Activated T-helper 1 cell treated with anti-CD3 and anti-CD28 coated beads, Interleukin-12 subunit alpha, Interleukin-12 subunit beta, Interleukin-2, Interleukin-4 antibody, amounts not matched to agents 30 ng/mL and 10 ng/mL and 1 ng/mL, durations not matched to agents 14 hours and 24 hours and 36 hours (primary cell): ENCODE measurements at regions of chr4 and their contacts with region 1.

Region 1: DNA sequence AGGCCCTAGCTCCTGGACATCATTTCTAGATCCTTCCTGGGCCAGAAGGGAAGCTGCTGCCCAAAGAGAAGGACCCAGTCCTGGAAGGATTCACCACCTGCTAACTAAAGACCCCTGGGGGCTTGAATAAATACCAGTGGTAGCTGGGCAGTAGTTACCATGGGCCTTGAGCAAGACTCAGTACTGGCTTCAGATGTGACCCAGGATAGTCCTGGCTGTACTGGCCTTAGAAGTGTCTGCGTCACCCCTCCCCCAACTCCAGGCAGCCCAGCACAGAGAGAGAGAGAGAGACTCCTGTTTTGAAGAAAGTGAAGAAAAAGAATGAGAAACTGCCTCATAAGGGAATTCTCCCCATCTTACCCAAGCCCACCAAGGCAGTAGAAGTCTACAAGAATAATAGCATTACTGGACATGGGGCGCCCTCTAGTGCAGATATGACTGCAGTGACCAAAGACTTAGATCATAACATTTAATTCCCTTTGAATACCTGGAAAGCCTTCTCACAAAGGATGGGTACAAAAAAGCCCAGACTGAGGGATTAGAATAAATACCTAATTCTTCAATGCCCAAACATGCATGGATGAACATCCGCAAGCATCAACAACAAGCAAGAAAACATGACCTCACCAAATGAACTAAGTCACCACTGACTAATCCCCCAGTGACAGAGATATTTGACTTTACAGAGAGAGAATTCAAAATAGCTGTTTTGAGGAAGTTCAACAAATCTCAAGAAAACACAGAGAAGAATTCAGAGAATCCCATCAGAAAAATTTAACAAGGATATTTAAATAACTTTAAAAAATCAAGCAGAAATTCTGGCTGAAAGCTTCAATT is 171.8 kb downstream of the HNRNPD start:
- DNase-seq: no peak
- H3K4me3 Mint-ChIP-seq: no peak overlapping the region
- H3K27ac Mint-ChIP-seq: no peak overlapping the region
- H3K4me1 Mint-ChIP-seq: no peaks in the 10 kb centered on the region
- H3K27me3 Mint-ChIP-seq: peaks cover 8% of the 10 kb centered on the region

Region 2: DNA sequence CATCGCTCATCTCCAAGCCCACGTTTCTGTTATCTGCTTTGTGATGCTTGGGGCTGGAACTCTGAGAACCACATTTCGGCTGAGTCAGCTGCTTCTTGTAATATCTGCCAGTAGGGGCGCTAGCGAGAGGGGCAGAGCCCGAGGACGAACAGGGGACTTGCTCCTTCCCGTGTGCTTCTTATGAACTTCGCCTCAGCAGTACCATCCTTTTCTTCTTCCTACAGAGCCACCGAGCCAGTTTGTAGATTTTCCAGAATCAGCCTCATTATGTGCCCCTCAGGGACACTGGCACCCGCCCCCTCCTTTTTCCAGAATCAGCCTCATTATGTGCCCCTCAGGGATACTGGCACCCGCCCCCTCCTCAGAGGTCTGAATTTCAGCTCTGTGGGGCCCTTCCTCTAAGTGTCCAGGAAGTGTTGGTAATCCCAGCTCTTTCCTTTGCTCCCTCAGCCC is 288.6 kb before region 1 on chr4:
- intact Hi-C with region 1: loop called (anchors 10 kb)
- DNase-seq: peak; percentile 28
- H3K4me3 Mint-ChIP-seq: no peak overlapping the region
- H3K27ac Mint-ChIP-seq: no peak overlapping the region
- H3K4me1 Mint-ChIP-seq: peaks cover 9% of the 10 kb centered on the region
- H3K27me3 Mint-ChIP-seq: peaks cover 8% of the 10 kb centered on the region

Region 3: GRCh38 chr4:82268050-82268825 is 66.2 kb after region 1 on chr4:
- intact Hi-C with region 1: loop called (anchors 1 kb)
- DNase-seq: peak; percentile 20
- H3K4me3 Mint-ChIP-seq: no peak overlapping the region
- H3K27ac Mint-ChIP-seq: peak overlapping the region; percentile 6
- H3K4me1 Mint-ChIP-seq: peaks cover 10% of the 10 kb centered on the region
- H3K27me3 Mint-ChIP-seq: peaks cover 7% of the 10 kb centered on the region

Region 4: DNA sequence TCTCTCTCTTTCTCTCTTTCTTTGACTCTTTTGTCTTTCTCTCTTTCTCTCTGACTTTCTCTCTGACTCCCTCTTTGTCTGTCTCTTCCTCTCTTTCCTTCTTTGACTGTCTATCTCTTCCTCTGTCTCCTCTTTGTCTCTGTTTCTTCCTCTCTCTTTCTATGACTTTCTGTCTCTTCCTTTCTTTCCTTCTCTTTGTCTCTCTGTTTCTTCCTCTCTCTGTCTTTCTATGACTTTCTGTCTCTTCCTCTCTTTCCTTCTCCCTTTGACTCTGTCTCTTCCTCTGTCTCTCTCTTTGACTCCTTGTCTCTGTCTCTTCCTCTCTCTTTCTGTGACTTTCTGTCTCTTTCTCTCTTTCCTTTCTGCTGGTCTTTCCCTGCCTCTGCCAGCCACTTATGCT is 133.0 kb after region 1 on chr4:
- intact Hi-C with region 1: no loop called
- DNase-seq: no peak
- H3K4me3 Mint-ChIP-seq: no peak overlapping the region
- H3K27ac Mint-ChIP-seq: no peak overlapping the region
- H3K4me1 Mint-ChIP-seq: no peaks in the 10 kb centered on the region
- H3K27me3 Mint-ChIP-seq: peaks cover 12% of the 10 kb centered on the region

Region 5: DNA sequence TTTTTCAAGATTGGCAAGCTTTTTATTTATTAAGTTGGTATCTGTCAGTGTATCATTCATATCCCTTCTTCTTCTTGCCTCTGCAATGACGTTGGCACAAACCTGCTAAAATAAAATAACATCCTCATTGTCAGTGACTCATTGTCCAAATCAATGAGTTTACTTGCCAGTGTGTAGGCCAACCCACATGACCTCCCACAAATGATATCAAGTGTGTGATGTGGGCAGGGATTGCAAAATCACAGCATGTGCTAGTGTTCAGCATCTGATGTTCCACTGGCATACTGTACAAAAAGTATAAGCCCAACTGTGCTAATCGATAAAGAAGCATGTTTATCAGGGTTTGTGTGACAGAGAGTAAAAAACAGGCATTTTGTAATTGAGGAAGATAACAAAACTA is 1359.4 kb after region 1 on chr4:
- intact Hi-C with region 1: no loop called
- DNase-seq: no peak
- H3K4me3 Mint-ChIP-seq: no peak overlapping the region
- H3K27ac Mint-ChIP-seq: no peak overlapping the region
- H3K4me1 Mint-ChIP-seq: peaks cover 24% of the 10 kb centered on the region
- H3K27me3 Mint-ChIP-seq: peaks cover 3% of the 10 kb centered on the region